ENCODE measurements at regions of chr5 and their contacts with region 1.

Region 1: GRCh38 chr5:172714491-172715421 is 56.2 kb downstream of the DUSP1 start:
- DNase-seq: peak; percentile 74 to 80
- H3K4me3 ChIP-seq: no peak overlapping the region
- H3K27ac ChIP-seq: peak overlapping the region; percentile 69 to 75
- H3K4me1 ChIP-seq: no peaks in the 10 kb centered on the region
- H3K27me3 ChIP-seq: no peaks in the 10 kb centered on the region
- CTCF ChIP-seq: peak; percentile 59 to 82 (median 74)
- POLR2A ChIP-seq: no peak

Region 2: DNA sequence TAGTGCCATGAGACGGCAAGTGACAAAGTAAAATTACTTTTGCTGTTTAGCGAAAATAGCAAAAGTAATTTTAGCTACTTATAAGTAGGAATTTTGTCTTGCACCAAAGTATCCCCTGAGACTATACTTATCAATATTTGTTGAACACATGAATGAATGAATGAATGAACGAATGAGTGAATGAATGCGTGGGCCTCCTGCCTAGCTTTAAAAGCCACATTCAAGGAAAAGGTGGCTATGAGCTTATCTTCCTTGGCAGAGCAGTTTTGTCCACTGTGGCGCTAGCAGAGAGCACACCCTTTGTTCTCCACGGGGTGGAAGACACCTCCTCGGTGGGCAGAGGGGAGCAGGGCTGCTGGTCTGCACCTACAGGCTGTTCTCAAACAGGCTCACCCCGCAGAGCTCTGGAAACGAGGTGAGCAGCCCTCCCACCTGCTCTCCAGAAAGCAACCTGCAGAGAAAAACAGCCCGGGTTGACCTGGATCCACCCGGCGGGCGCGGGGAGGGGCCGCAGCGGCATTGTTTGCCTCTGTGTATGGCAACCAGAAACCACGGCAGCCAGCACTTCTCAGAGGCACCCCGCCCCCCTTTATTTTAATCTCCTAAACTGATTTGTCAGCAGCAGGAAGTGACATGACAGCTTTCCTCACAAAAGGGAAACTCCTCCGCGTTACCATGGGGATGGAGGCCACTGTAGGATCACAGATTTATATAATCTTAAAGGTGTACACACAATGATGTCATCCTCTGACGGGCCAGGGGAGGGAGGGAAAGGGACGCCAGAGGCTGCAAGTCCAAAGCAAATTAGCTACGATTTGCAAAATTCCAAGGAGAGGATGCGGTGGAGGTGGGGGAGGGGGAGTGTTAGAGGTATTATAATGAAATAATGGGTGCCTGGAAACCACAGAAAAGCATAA is 50.4 kb after region 1 on chr5:
- intact Hi-C with region 1: loop called (anchors 5 kb)
- DNase-seq: peak; percentile 93 to 100
- H3K4me3 ChIP-seq: peak overlapping the region; percentile 8 to 14
- H3K27ac ChIP-seq: peak overlapping the region; percentile 99
- H3K4me1 ChIP-seq: no peaks in the 10 kb centered on the region
- H3K27me3 ChIP-seq: no peaks in the 10 kb centered on the region
- CTCF ChIP-seq: peak in 1 of 4 experiments; percentile 2
- POLR2A ChIP-seq: peak in 1 of 2 donors; percentile 43

Region 3: GRCh38 chr5:172932313-172933017 is 217.7 kb after region 1 on chr5:
- intact Hi-C with region 1: loop called (anchors 5 kb)
- DNase-seq: peak; percentile 75 to 78
- H3K4me3 ChIP-seq: no peak overlapping the region
- H3K27ac ChIP-seq: peak overlapping the region; percentile 77 to 82
- H3K4me1 ChIP-seq: peaks cover 0 to 4% of the 10 kb centered on the region in 2 donors
- H3K27me3 ChIP-seq: no peaks in the 10 kb centered on the region
- CTCF ChIP-seq: peak; percentile 96 to 98 (median 98)
- POLR2A ChIP-seq: no peak

Measured in uterus (tissue), 4 donors.